Right ventricle myocardium inferior (tissue), 1 donor: ENCODE measurements at regions of chr5 and their contacts with region 1.

Region 1: GRCh38 chr5:172939071-172939470 is 20.2 kb upstream of the RPL26L1 start:
- DNase-seq: no peak
- ATAC-seq: no peak

Region 2: DNA sequence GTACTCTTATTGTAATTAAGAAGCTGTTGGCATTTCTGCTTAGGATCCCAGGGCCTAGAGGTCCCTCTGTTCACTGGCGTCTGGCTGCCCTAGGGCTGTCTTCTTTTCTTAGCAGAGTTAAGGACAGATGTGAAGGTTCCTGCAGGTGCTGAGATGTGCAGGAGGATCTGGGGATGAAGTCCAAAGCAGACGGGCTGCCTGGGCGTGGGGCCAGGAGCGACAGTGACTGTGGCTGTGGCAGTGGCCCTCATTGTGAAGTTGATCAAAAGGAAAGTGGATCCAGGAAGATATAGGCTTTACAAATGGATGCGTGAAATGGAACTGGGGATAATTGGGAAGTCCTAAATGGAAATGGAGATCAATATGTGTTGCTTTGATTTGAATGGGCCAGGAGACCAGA is 465.6 kb before region 1 on chr5:
- intact Hi-C with region 1: loop called (anchors 5 kb)
- DNase-seq: no peak
- ATAC-seq: no peak

Region 3: GRCh38 chr5:172902497-172903200 is 36.4 kb before region 1 on chr5:
- intact Hi-C with region 1: no loop called
- DNase-seq: peak; percentile 85
- ATAC-seq: peak; percentile 73